ENCODE measurements at regions of chr17 and their contacts with region 1.

Region 1: DNA sequence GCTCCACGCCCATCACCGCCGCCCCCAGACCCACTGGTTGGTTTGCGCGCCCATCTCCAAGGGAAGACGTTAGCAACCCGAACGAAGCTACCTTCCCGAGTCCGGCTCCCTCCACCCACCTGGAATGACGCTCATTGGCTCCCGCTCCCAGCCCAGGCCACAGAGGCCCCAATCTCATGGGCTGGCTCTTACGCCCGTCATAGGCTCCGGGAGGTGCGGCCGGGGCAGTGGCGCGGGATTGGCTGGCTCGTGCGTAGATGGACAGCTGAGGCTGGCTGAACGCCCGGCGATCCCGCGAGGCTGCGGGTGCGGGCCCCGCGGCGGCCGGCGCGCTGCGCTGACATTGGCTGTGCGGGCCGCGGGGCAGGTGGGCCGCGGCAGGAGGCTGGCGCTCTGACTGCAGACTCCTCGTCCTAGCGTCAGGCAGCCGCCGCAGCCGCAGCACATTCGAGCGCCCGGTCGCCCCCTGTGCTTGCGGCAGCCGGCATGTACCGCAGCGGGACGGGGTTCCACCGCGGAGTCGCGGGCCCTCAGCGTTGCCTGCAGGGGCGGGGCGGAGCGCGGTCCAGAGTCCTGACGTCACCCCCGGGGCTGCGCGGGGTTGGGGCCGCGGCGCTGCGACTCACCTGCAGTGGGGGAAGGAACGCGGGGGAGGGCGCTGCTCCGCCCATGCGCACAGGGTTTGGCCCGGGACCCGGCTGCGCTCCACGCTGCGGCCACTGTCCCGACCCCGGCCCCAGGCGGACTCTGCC is 453 bp upstream of the MYH10 start:
- DNase-seq: peak; percentile 93
- H3K4me3 ChIP-seq: peak overlapping the region; percentile 86 to 96 (median 96)
- H3K27ac ChIP-seq: peak overlapping the region; percentile 75
- H3K4me1 ChIP-seq: peaks cover 10% of the 10 kb centered on the region
- H3K27me3 ChIP-seq: no peaks in the 10 kb centered on the region
- CTCF ChIP-seq: peak in 2 of 3 experiments; percentile 17 to 52

Region 2: DNA sequence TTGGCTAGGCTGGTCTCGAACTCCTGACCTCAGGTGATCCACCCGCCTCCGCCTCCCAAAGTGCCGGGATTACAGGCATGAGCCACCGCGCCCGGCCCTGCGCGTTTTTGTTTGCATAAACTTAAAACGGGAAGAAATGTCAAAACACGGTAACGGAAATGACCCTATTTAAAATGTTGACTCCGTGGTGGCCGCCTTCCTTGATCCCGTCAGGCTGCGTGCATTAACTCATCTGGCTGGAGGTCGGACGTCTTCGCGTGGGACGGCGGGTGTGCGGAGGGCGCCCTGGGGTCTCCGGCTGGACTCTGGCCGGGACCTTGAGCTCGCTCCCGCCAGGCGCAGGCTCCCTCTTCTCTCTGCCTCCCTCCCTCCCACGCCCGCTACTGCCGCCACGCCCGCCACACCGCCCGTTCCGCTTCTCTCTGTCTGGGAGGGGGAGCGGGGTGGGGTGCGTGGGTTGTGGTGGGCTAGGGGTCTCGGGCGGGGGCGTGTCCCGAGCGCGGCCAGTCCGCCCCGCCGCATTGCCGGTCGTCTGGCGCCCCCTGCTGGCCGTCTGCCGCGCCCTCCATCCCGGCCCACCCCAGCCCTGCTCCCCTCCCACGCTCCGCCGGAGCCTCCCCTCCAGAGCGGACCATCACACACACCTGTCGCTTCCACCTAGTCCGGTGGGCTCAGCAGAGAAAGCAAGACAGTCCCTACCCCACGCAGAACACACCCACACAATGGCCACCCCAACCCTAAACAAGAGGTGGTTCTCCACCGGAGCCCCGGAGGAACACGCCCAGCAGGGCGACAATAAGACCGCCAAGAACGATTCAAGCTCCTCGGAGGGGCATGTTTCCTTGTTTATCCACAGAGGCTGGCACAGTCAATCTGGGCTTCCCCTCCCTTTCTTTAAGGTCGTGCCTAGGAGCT is 114.9 kb after region 1 on chr17:
- dilution Hi-C with region 1: loop called (anchors 25 kb)
- DNase-seq: no peak
- H3K4me3 ChIP-seq: peak overlapping the region; percentile 56 to 63 (median 62)
- H3K27ac ChIP-seq: no peak overlapping the region
- H3K4me1 ChIP-seq: peaks cover 5% of the 10 kb centered on the region
- H3K27me3 ChIP-seq: peaks cover 10% of the 10 kb centered on the region
- CTCF ChIP-seq: peak in 2 of 3 experiments; percentile 85 to 94